OCI-LY7 (cell line): ENCODE measurements at regions of chr2 and their contacts with region 1.

Region 1: GRCh38 chr2:164657129-164657528 is 35.8 kb upstream of the GRB14 start:
- DNase-seq: no peak
- H3K4me3 ChIP-seq: no peak overlapping the region
- H3K27ac ChIP-seq: no peak overlapping the region
- H3K4me1 ChIP-seq: no peaks in the 10 kb centered on the region
- CTCF ChIP-seq: no peak

Region 2: GRCh38 chr2:165371356-165371755 is 714.2 kb after region 1 on chr2:
- CTCF ChIA-PET with region 1: no interaction called
- POLR2A ChIA-PET with region 1: no interaction called
- intact Hi-C with region 1: loop called (anchors 5 kb)
- DNase-seq: no peak
- H3K4me3 ChIP-seq: no peak overlapping the region
- H3K27ac ChIP-seq: no peak overlapping the region
- H3K4me1 ChIP-seq: no peaks in the 10 kb centered on the region
- CTCF ChIP-seq: no peak